WTC11 (cell line): ENCODE measurements at regions of chr20 and their contacts with region 1.

Region 1: GRCh38 chr20:50179507-50180016 is 11.1 kb upstream of the CEBPB start:
- DNase-seq: no peak
- ATAC-seq: peak; percentile 53
- H3K4me3 Mint-ChIP-seq: no peak overlapping the region
- H3K27ac Mint-ChIP-seq: peak overlapping the region; percentile 95
- H3K4me1 Mint-ChIP-seq: 0 out of 2 replicates have a peak, but pooled peaks cover 3% of the 10 kb centered on the region
- H3K27me3 Mint-ChIP-seq: peaks cover 4% of the 10 kb centered on the region; the same call in 1 of the 2 replicates
- CTCF ChIP-seq: peak; percentile 34

Region 2: GRCh38 chr20:49846206-49846807 is 333.3 kb before region 1 on chr20:
- CTCF ChIA-PET with region 1: no interaction called
- POLR2A ChIA-PET with region 1: no interaction called
- DNase-seq: peak; percentile 39
- ATAC-seq: peak; percentile 84
- H3K4me3 Mint-ChIP-seq: no peak overlapping the region
- H3K27ac Mint-ChIP-seq: no peak overlapping the region
- H3K4me1 Mint-ChIP-seq: peaks cover 35% of the 10 kb centered on the region
- H3K27me3 Mint-ChIP-seq: no peaks in the 10 kb centered on the region
- CTCF ChIP-seq: peak; percentile 26; the same call in 1 of the 2 replicates

Region 3: GRCh38 chr20:50115591-50116372 is 63.8 kb before region 1 on chr20:
- CTCF ChIA-PET with region 1: interaction called, 101 read pairs
- POLR2A ChIA-PET with region 1: interaction called, 4 read pairs
- DNase-seq: peak; percentile 91
- ATAC-seq: peak; percentile 83
- H3K4me3 Mint-ChIP-seq: peak overlapping the region; percentile 98
- H3K27ac Mint-ChIP-seq: peak overlapping the region; percentile 91
- H3K4me1 Mint-ChIP-seq: peaks cover 39% of the 10 kb centered on the region
- H3K27me3 Mint-ChIP-seq: 0 out of 2 replicates have a peak, but pooled peaks cover 2% of the 10 kb centered on the region
- CTCF ChIP-seq: no peak

Region 4: GRCh38 chr20:50138479-50139393 is 40.8 kb before region 1 on chr20:
- CTCF ChIA-PET with region 1: interaction called, 13 read pairs
- POLR2A ChIA-PET with region 1: interaction called, 6 read pairs
- DNase-seq: peak; percentile 36
- ATAC-seq: peak; percentile 55
- H3K4me3 Mint-ChIP-seq: no peak overlapping the region
- H3K27ac Mint-ChIP-seq: peak overlapping the region; percentile 9; the same call in 1 of the 2 replicates
- H3K4me1 Mint-ChIP-seq: peaks cover 29% of the 10 kb centered on the region
- H3K27me3 Mint-ChIP-seq: no peaks in the 10 kb centered on the region
- CTCF ChIP-seq: no peak

Region 5: DNA sequence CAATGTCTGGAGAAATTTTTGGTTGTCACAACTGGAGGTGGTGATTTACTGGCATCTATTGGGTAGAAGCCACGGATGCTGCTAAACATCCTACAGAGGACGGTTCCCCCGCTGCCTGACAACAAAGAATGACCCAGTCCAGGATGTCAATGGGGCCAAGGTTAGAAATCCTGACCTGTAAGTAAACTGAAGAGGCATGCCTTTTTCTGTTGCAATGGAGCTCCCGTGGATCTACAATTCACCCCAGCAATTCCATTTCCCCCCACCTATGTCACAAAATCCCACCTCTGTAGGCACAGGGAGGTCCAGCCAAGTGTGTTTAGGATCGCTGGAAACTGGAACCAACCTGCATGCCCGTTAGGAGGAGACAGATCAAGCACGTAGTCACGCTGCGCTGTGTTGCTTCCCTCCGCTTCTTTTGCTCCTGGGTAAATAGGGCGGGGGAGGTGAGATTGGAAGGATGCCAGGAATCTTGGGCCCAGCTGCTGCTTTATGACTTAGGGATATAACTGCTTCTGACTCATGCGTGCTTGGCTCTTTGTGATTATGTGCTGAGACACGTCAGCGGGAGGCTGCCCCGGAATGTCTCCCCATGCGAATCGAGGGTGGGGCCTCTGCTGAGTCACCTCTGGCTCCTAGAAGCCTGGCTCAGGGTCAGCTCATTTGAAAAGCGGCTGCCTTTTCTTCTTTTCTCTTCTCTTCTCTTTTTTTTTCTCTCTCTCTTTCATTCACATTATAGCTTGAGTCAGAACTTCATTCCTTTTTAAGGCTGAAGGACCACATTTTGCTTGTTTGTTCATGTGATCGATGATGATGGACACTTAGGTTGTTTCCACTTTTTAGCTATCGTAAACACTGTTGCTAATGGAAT is 13.6 kb before region 1 on chr20:
- CTCF ChIA-PET with region 1: interaction called, 16 read pairs
- POLR2A ChIA-PET with region 1: no interaction called
- DNase-seq: peak; percentile 82
- ATAC-seq: peak; percentile 81
- H3K4me3 Mint-ChIP-seq: peak overlapping the region; percentile 65
- H3K27ac Mint-ChIP-seq: peak overlapping the region; percentile 80
- H3K4me1 Mint-ChIP-seq: peaks cover 25% of the 10 kb centered on the region
- H3K27me3 Mint-ChIP-seq: no peaks in the 10 kb centered on the region; the same call in 1 of the 2 replicates
- CTCF ChIP-seq: no peak

Region 6: GRCh38 chr20:50374541-50375153 is 195.1 kb after region 1 on chr20:
- CTCF ChIA-PET with region 1: no interaction called
- POLR2A ChIA-PET with region 1: no interaction called
- DNase-seq: no peak
- ATAC-seq: no peak
- H3K4me3 Mint-ChIP-seq: no peak overlapping the region
- H3K27ac Mint-ChIP-seq: no peak overlapping the region
- H3K4me1 Mint-ChIP-seq: 0 out of 2 replicates have a peak, but pooled peaks cover 4% of the 10 kb centered on the region
- H3K27me3 Mint-ChIP-seq: no peaks in the 10 kb centered on the region
- CTCF ChIP-seq: no peak

Region 7: DNA sequence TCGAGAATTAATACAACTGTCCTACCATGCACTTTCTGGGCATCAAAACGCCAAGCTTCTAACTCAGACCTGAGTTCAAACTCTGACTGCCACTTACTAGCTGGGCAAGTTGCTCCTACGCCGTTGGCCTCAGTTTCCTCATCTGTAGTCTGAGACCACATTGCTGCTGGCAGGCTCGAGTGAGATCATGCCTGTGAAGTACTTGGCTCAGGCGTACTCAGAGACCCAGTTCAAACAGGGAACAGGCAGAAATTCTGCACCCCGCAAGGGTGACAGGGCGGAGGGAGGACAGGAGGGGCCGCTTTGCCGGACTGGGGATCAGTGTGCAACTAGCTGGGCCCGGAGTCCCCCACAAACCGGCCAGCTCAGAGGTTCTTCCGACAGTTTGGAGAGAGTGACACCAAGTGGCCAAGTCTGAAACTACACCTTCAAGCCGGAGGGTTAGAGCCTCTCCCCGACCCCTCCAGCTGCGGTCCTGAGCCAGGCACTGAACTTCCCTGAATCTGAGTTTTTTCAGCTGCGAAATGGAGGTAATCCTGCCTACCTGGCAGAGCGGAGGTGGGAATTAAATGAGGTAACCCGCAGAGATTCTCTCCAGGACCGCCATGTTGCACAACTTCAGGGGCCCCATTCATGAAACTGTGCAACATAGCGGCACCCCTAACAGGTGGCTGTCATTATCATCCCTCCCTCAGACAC is 284.6 kb after region 1 on chr20:
- CTCF ChIA-PET with region 1: interaction called, 15 read pairs
- POLR2A ChIA-PET with region 1: no interaction called
- DNase-seq: peak; percentile 72
- ATAC-seq: peak; percentile 82
- H3K4me3 Mint-ChIP-seq: no peak overlapping the region
- H3K27ac Mint-ChIP-seq: no peak overlapping the region
- H3K4me1 Mint-ChIP-seq: peaks cover 2% of the 10 kb centered on the region
- H3K27me3 Mint-ChIP-seq: no peaks in the 10 kb centered on the region; the same call in 1 of the 2 replicates
- CTCF ChIP-seq: peak; percentile 79; the same call in 1 of the 2 replicates

Region 8: DNA sequence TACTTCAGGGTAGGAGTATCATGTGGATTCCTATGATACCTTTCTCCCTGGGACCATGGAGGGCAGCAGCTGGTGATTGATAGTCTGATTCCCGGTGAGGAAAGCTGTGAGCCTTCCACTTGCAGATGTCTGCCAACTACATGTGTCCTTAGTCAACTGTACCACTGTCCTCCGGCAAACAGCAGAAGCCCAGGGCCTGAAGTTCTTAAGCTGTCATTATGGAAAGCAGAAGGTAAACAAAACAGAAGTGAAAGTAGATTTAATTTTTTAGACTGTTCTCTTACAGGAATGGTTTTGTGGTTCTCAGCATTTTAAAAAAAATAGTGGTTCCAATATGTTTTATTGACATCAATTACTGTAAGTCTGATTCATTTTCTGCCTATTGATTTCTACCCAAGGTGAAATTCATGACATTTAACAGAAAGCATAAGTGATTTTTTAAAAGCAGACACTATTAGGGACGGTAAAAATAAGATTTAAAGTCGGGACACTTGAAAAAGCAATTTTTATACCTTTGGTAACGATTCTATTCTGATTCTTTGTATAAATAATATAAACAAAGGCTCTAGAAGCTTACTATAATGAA is 367.3 kb after region 1 on chr20:
- CTCF ChIA-PET with region 1: no interaction called
- POLR2A ChIA-PET with region 1: no interaction called
- DNase-seq: no peak
- ATAC-seq: no peak
- H3K4me3 Mint-ChIP-seq: no peak overlapping the region
- H3K27ac Mint-ChIP-seq: no peak overlapping the region
- H3K4me1 Mint-ChIP-seq: 0 out of 2 replicates have a peak, but pooled peaks cover 3% of the 10 kb centered on the region
- H3K27me3 Mint-ChIP-seq: no peaks in the 10 kb centered on the region
- CTCF ChIP-seq: no peak

Region 9: DNA sequence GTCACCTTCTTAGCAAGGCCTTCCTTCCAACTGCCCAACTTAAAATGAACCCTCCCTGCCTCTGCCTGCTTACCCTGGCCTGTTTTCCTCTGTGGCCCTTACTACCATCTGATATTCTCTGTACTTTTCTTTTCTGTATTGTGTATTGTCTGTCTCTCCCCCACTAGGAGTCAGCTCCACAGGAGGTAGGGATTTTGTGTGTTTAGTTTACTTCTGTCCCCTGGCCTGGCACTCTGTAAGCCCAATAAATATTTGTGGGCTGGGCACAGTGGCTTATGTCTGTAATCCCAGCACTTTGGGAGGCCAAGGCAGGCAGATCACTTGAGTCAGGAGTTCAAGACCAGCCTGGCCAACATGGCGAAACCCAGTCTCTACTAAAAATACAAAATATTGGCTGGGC is 439.0 kb after region 1 on chr20:
- CTCF ChIA-PET with region 1: no interaction called
- POLR2A ChIA-PET with region 1: no interaction called
- DNase-seq: no peak
- ATAC-seq: no peak
- H3K4me3 Mint-ChIP-seq: no peak overlapping the region
- H3K27ac Mint-ChIP-seq: no peak overlapping the region
- H3K4me1 Mint-ChIP-seq: no peaks in the 10 kb centered on the region
- H3K27me3 Mint-ChIP-seq: no peaks in the 10 kb centered on the region
- CTCF ChIP-seq: no peak